PC-9 (cell line): ENCODE measurements at regions of chr14 and their contacts with region 1.

Region 1: DNA sequence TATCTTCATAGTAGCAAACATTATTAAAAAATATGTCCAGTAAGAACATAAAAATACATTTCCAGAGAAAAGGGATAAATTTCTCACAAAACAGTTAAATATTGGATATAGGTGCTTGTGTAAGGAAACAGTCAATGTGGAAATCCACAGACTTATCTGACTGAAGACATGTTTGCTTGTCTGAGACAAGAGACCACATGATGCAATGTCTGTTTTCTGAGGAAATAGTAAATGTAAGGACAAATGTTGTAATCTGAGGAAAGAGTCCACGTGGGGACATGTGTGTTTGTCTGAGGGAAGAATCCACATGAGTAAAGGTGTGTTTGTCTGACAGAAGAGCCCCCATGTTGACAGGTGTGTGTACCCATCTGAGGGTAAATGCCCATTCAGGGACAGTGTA is 1093.2 kb downstream of the TMEM121 start:
- DNase-seq: no peak
- H3K4me3 ChIP-seq: no peak overlapping the region
- H3K27ac ChIP-seq: no peak overlapping the region
- H3K4me1 ChIP-seq: no peaks in the 10 kb centered on the region
- H3K27me3 ChIP-seq: no peaks in the 10 kb centered on the region
- CTCF ChIP-seq: no peak

Region 2: DNA sequence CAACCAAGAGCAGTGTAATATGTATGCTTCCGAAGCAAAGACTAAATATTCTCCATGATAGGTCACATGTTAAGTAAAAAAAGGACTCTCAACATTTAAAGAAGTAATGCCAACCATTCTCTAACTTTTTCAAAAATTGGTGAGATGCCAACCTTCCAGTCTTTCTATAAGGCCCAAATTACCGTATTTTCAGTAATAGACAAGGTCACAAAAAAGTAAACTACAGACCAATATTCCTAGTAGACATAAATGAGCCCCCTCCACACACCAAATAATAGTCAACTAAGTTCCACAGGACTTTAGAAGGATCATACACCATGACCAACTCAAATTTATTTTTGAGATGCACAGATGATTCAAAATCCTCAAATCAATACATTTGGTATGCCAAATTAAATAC is 225.9 kb before region 1 on chr14:
- CTCF ChIA-PET with region 1: interaction called, 14 read pairs
- POLR2A ChIA-PET with region 1: no interaction called
- intact Hi-C with region 1: no loop called
- DNase-seq: no peak
- H3K4me3 ChIP-seq: no peak overlapping the region
- H3K27ac ChIP-seq: no peak overlapping the region
- H3K4me1 ChIP-seq: no peaks in the 10 kb centered on the region
- H3K27me3 ChIP-seq: peaks cover 42% of the 10 kb centered on the region
- CTCF ChIP-seq: no peak